ENCODE measurements at regions of chr11 and their contacts with region 1.

Region 1: GRCh38 chr11:28439403-28439802 is 331.2 kb downstream of the METTL15 start:
- DNase-seq: no peak
- H3K4me3 ChIP-seq: no peak overlapping the region
- H3K27ac ChIP-seq: no peak overlapping the region
- H3K4me1 ChIP-seq: no peaks in the 10 kb centered on the region
- CTCF ChIP-seq: no peak

Region 2: DNA sequence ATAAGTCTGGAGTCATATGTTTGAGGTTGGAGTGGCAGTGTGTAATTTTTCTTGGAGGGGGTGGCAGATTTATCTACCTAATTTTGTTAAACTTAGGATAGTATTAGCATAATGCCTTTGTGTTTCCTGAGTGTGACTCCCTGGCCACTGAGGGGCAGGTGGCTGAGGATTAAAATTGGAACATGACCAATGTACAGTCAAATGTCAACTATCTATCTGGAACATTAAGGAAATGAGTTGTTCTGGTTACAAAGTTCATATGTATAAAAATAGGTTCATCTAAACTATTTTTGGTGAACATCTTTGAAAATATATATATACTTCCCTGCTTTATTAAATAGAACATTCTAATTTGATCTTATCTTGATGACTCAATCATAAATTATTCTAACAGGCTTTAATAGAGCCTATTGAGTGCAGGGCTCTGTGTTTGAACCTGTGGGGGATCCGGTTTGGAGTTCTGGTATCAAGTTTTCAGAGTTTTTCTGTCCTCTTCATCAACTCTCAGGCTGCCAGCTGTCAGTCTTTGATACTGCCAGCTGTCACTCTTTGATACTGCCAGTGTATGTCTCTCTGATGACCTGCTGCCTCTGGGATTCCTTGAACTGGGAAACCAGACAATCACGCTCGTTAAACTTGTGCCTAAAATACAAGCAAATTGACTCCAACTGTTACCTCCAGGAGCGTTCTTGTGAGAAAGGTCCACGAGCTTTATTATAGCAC is 21.6 kb before region 1 on chr11:
- CTCF ChIA-PET with region 1: no interaction called
- POLR2A ChIA-PET with region 1: no interaction called
- intact Hi-C with region 1: no loop called
- DNase-seq: no peak
- H3K4me3 ChIP-seq: no peak overlapping the region
- H3K27ac ChIP-seq: no peak overlapping the region
- H3K4me1 ChIP-seq: no peaks in the 10 kb centered on the region
- CTCF ChIP-seq: no peak

Region 3: GRCh38 chr11:28464252-28464867 is 25.0 kb after region 1 on chr11:
- CTCF ChIA-PET with region 1: no interaction called
- POLR2A ChIA-PET with region 1: no interaction called
- intact Hi-C with region 1: no loop called
- DNase-seq: no peak
- H3K4me3 ChIP-seq: no peak overlapping the region
- H3K27ac ChIP-seq: no peak overlapping the region
- H3K4me1 ChIP-seq: no peaks in the 10 kb centered on the region
- CTCF ChIP-seq: no peak

Region 4: GRCh38 chr11:29750392-29750791 is 1311.0 kb after region 1 on chr11:
- CTCF ChIA-PET with region 1: interaction called, 13 read pairs
- POLR2A ChIA-PET with region 1: no interaction called
- intact Hi-C with region 1: no loop called
- DNase-seq: no peak
- H3K4me3 ChIP-seq: no peak overlapping the region
- H3K27ac ChIP-seq: no peak overlapping the region
- H3K4me1 ChIP-seq: no peaks in the 10 kb centered on the region
- CTCF ChIP-seq: no peak